Activated CD4-positive, alpha-beta memory T cell treated with anti-CD3 and anti-CD28 coated beads for 36 hours (primary cell): ENCODE measurements at regions of chr17 and their contacts with region 1.

Region 1: DNA sequence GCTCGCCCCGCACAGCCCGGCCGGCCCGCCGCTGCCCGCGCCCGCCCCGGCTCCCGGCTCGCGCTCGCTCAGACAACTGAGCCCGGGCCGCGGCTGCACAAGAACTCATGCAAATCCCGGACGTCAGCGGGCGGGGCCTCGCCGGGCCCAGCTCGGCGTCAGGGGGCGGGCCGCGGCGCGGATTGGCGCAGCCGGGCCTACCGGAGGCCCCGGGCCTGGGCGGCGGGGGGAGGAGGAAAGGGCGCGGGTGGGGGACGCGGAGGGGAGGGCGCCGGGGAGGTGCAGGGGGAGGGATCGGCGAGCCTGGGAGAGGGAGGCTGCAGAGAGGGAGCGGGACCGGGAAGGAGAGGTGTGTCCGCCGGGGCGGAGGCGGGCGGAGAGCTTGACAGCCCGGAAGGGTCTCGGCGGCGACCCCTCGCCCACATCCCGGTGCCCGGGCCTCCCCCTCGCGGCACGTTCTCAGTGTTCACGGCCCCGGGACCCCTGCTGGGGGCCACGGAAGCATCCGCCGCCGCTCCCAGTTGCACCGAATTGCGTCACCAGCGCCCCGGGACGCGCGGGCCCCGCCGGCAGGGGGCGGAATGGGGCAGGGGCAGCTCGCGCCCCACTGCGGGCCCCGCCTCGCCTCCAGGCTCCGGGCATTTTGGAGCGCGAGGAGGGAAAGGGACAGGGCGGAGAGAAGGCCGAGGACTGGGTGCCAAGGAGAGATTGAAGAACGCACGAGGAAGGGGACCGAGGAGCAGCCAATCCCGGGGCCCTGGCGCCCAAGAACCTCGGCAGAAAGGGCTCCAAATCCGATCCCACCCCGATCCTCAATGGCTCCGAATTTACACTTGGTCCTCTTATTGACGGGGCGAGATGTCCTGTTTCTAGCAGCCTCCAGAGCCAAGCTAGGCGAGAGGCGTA is at the start of gene CBX4:
- DNase-seq: peak; percentile 94
- H3K4me3 Mint-ChIP-seq: peak within 1 kb of the TSS; percentile 85
- H3K27ac Mint-ChIP-seq: peak within 1 kb of the TSS; percentile 78
- H3K4me1 Mint-ChIP-seq: peaks cover 46% of the 10 kb centered on the region
- H3K27me3 Mint-ChIP-seq: peaks cover 31% of the 10 kb centered on the region
- total RNA-seq, gene CBX4: 14.0 to 14.2 TPM

Region 2: GRCh38 chr17:79735096-79735495 is 104.5 kb before region 1 on chr17:
- CTCF ChIA-PET with region 1: no interaction called
- POLR2A ChIA-PET with region 1: no interaction called
- intact Hi-C with region 1: no loop called
- DNase-seq: no peak
- H3K4me3 Mint-ChIP-seq: no peak overlapping the region
- H3K27ac Mint-ChIP-seq: no peak overlapping the region
- H3K4me1 Mint-ChIP-seq: peaks cover 9% of the 10 kb centered on the region
- H3K27me3 Mint-ChIP-seq: peaks cover 16% of the 10 kb centered on the region

Region 3: DNA sequence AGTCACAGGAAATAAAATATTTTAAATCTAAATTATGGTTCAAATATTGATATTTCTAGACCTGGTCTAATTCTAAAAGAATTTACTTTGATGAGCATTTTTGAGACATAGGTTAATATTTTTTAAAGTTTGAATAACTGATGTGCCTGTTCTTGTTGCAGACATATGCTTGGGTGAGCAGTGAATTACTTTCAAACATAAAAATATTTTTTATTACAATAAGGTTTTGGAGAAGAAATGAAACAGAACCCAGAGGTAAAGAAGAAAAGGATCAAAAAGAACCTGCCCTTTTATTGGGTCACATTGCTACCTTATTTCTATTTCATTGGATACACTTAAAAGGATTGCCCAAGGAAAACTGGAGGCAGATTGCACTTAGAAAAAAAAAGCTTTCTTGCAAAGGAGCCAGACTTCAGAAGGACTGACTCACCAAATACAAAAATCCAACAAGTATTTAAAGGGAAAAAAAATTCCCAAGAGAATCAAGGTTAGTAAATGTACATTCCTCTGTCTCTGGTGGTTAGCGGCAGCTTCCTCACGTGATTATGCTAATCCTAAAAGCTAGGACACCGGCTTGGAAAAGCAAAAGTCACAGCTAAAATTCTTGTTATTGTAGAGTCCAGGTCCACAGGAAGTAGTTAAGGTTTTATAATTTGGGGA is 90.3 kb before region 1 on chr17:
- CTCF ChIA-PET with region 1: interaction called, 14 read pairs
- POLR2A ChIA-PET with region 1: interaction called, 3 read pairs
- intact Hi-C with region 1: loop called (anchors 5 kb)
- DNase-seq: no peak
- H3K4me3 Mint-ChIP-seq: no peak overlapping the region
- H3K27ac Mint-ChIP-seq: no peak overlapping the region
- H3K4me1 Mint-ChIP-seq: peaks cover 24% of the 10 kb centered on the region
- H3K27me3 Mint-ChIP-seq: peaks cover 45% of the 10 kb centered on the region

Region 4: DNA sequence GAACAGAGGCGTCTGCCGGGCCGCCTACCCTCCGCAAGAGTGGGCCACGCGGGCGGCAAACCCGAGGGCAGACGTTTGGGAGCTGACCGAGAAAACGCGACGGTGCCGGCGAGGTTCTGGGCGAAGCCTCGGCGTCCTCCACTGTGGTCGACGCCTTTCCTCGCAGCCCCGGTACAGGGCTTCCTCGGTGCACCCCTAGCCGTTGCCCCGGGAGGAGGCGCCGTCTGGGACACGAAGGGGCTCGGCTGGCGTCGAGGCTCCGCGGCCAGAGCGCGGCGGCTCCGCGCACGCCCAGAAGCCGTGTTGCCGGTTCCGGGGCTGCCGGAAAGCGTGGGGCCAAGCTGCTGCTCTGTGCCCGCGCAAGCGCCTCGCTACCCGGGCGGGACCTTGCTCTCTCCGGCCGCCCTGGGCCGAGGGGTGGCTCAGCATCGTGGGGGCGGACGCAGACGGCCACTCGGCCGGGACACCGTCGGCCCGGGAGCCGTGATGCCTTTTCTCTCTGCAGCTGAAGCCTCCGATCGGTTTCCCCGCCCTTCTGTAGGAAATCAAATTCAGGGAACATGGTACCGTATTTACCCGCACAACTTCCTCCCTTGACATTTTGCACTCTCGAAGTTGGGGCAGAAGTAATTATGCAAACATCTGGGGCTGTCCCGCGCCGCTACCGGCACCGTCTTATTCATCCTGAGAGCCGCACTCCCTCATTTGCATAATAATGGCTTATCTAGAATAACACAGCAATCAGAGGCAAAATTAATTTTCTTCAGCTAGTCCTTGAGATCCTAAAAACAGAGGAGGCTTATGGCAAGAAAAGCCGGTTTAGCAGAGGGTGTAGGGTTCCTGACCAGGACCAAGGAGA is 35.4 kb before region 1 on chr17:
- CTCF ChIA-PET with region 1: interaction called, 13 read pairs
- POLR2A ChIA-PET with region 1: interaction called, 23 read pairs
- intact Hi-C with region 1: no loop called
- DNase-seq: peak; percentile 90
- H3K4me3 Mint-ChIP-seq: peak overlapping the region; percentile 68
- H3K27ac Mint-ChIP-seq: peak overlapping the region; percentile 84
- H3K4me1 Mint-ChIP-seq: peaks cover 37% of the 10 kb centered on the region
- H3K27me3 Mint-ChIP-seq: peaks cover 78% of the 10 kb centered on the region

Region 5: DNA sequence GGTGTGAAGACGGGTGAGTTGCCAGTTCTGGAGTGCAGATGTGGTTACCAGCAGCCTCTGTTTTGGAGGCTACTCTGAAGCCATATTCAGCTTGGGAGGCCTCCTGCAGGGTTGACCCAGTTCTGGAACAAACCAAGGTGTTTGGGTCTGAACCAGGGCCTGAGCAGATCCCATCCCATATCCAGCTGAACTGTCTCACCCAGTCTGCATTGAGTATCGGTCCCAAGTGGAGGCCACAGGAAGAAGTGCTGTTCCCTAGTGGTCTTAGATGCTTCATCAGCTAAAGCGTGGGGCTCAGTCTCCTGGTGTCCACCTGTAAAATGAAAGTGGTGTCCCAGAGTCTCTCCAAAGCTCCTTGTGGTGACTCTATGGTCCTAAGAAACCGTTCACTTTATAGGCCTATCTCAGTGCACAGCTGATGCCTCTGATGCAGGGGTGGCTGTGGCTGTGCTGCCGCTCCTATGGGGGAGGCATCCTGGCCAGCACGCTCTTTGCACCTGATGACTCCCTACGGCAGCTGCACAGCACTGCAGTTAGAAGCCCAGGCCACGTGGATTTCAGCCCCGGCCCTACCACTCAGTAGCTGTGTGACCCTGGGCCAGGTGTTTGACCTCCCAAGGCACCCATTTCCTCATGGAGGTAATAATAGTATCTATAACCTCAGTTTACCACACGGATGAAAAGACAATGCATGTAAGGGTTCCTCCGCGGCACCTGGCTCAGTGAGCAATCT is 21.4 kb before region 1 on chr17:
- CTCF ChIA-PET with region 1: interaction called, 49 read pairs
- POLR2A ChIA-PET with region 1: interaction called, 19 read pairs
- intact Hi-C with region 1: no loop called
- DNase-seq: no peak
- H3K4me3 Mint-ChIP-seq: no peak overlapping the region
- H3K27ac Mint-ChIP-seq: no peak overlapping the region
- H3K4me1 Mint-ChIP-seq: peaks cover 6% of the 10 kb centered on the region
- H3K27me3 Mint-ChIP-seq: peaks cover 18% of the 10 kb centered on the region

Region 6: GRCh38 chr17:79923974-79924638 is 84.5 kb after region 1 on chr17:
- CTCF ChIA-PET with region 1: no interaction called
- POLR2A ChIA-PET with region 1: no interaction called
- intact Hi-C with region 1: loop called (anchors 10 kb)
- DNase-seq: peak; percentile 70
- H3K4me3 Mint-ChIP-seq: no peak overlapping the region
- H3K27ac Mint-ChIP-seq: no peak overlapping the region
- H3K4me1 Mint-ChIP-seq: no peaks in the 10 kb centered on the region
- H3K27me3 Mint-ChIP-seq: peaks cover 12% of the 10 kb centered on the region